Caco-2 (cell line): ENCODE measurements at regions of chr16 and their contacts with region 1.

Region 1: GRCh38 chr16:53054670-53055485 is at the start of gene CHD9:
- DNase-seq: peak; percentile 90 to 92
- H3K4me3 ChIP-seq: peak within 1 kb of the TSS; percentile 77
- H3K4me3 Mint-ChIP-seq: peak within 1 kb of the TSS; percentile 82
- H3K27ac Mint-ChIP-seq: peak within 1 kb of the TSS; percentile 77
- H3K4me1 ChIP-seq: peaks cover 11% of the 10 kb centered on the region; the same call in 1 of the 2 replicates
- H3K4me1 Mint-ChIP-seq: peaks cover 14% of the 10 kb centered on the region
- H3K27me3 ChIP-seq: no peaks in the 10 kb centered on the region
- H3K27me3 Mint-ChIP-seq: no peaks in the 10 kb centered on the region
- CTCF ChIP-seq: peak; percentile 98 to 99
- total RNA-seq, gene CHD9: 29.1 and 32.0 TPM in 2 replicates

Region 2: DNA sequence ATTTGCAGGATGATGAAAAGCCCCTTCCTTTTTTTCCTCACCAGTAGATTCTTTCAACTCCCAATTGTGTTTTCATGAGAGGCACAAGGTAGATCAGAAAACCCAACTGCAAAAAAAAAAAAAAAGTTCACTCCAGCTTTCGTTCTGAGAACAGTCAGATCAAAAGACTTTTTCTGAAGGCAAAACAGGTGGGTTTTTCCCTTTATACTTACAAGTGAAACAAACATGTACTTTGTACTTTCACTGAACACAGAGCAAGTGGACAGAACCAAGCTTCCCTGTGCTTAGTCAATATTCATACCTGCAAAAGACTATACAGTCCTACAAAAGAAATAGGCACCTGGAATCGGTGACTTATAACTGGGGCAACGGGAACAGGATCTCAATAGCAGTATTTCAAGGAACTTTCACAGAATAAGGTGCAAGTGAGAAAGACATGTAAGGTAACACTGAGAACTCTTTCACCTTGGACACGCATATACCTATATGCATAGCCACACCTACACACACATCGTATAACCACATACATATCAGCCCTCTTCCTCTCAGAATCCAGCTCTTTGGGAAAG is 562.0 kb before region 1 on chr16:
- CTCF ChIA-PET with region 1: no interaction called
- POLR2A ChIA-PET with region 1: no interaction called
- intact Hi-C with region 1: no loop called
- DNase-seq: peak in 1 of 2 experiments; percentile 54
- H3K4me3 ChIP-seq: no peak overlapping the region
- H3K4me3 Mint-ChIP-seq: peak overlapping the region; percentile 57
- H3K27ac Mint-ChIP-seq: peak overlapping the region; percentile 91
- H3K4me1 ChIP-seq: peaks cover 39% of the 10 kb centered on the region
- H3K4me1 Mint-ChIP-seq: peaks cover 38% of the 10 kb centered on the region
- H3K27me3 ChIP-seq: no peaks in the 10 kb centered on the region
- H3K27me3 Mint-ChIP-seq: no peaks in the 10 kb centered on the region
- CTCF ChIP-seq: no peak

Region 3: GRCh38 chr16:53022374-53022773 is 32.5 kb before region 1 on chr16:
- CTCF ChIA-PET with region 1: no interaction called
- POLR2A ChIA-PET with region 1: no interaction called
- intact Hi-C with region 1: no loop called
- DNase-seq: peak; percentile 59 to 73
- H3K4me3 ChIP-seq: no peak overlapping the region
- H3K4me3 Mint-ChIP-seq: no peak overlapping the region
- H3K27ac Mint-ChIP-seq: no peak overlapping the region
- H3K4me1 ChIP-seq: no peaks in the 10 kb centered on the region
- H3K4me1 Mint-ChIP-seq: no peaks in the 10 kb centered on the region
- H3K27me3 ChIP-seq: peaks cover 2% of the 10 kb centered on the region; the same call in 1 of the 2 replicates
- H3K27me3 Mint-ChIP-seq: peaks cover 6% of the 10 kb centered on the region
- CTCF ChIP-seq: peak; percentile 75 to 76

Region 4: DNA sequence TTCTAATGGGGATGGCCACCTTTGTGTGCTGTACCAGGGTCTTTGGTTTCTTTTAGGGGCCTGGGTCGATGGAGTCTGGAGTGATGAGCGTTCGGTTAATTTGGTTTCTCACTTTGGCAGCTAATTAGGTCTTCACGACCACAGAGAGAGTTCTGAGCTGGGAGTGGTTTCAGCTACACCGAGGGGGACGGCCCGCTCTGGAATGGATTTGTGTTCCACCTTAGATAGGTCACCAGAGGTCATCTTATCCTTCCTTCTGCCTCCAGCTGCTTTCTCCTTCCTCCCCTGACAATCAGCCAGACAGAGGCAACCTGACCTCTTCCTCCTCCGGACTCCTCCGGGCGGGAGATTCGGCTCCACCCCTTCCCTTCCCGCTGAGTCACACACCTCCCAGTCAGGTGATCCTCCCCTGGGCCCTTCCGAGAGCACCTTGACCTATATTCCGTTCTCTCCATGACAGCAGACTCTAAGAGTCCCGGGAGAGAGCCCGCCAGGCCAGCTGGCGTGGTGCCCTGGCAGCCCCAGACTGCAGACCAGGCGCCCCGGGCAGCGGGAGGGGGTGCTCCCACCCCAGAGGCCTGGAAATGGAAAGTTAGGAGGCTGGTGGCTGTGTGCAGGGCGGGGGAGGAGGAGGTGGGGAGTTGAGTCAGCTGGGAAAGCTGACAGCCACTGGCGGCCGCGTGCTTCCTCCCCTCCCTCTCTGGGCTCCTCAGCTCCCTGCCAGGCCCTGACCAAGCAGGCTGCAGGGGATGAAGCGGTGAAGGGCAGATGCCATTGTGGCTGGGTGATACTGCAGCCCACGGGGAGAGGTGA is 44.6 kb after region 1 on chr16:
- CTCF ChIA-PET with region 1: interaction called, 13 read pairs
- POLR2A ChIA-PET with region 1: interaction called, 5 read pairs
- intact Hi-C with region 1: loop called (anchors 1 kb)
- DNase-seq: peak; percentile 91 to 95
- H3K4me3 ChIP-seq: peak overlapping the region; percentile 46
- H3K4me3 Mint-ChIP-seq: peak overlapping the region; percentile 77
- H3K27ac Mint-ChIP-seq: peak overlapping the region; percentile 98
- H3K4me1 ChIP-seq: peaks cover 24% of the 10 kb centered on the region
- H3K4me1 Mint-ChIP-seq: peaks cover 12% of the 10 kb centered on the region
- H3K27me3 ChIP-seq: no peaks in the 10 kb centered on the region
- H3K27me3 Mint-ChIP-seq: no peaks in the 10 kb centered on the region
- CTCF ChIP-seq: no peak

Region 5: DNA sequence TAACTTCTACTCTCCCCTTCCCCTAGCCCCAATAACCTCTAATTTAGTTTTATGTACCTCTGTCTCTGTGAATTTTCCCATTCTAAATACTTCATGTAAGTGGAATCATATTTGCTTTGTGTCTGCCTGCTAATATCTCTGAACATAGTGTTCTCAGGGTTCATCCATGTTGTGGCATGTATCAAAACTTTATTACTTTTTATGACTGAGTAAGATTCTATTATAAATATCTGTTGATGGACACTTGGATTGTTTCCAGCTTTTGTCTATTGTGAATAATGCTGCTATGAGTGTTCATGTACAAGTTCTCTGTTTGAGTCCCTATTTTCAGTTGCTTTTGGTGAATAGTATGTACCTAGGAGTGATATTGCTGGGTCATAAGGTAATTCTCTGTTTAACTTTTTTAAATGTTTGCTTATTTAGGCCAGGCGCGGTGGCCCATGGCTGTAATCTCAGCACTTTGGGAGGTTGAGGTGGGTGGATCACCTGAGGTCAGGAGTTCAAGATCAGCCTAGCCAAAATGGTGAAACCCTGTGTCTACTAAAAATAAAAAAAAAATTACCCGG is 92.7 kb after region 1 on chr16:
- CTCF ChIA-PET with region 1: no interaction called
- POLR2A ChIA-PET with region 1: no interaction called
- intact Hi-C with region 1: no loop called
- DNase-seq: no peak
- H3K4me3 ChIP-seq: no peak overlapping the region
- H3K4me3 Mint-ChIP-seq: no peak overlapping the region
- H3K27ac Mint-ChIP-seq: no peak overlapping the region
- H3K4me1 ChIP-seq: peaks cover 4% of the 10 kb centered on the region
- H3K4me1 Mint-ChIP-seq: no peaks in the 10 kb centered on the region
- H3K27me3 ChIP-seq: no peaks in the 10 kb centered on the region
- H3K27me3 Mint-ChIP-seq: no peaks in the 10 kb centered on the region
- CTCF ChIP-seq: no peak

Region 6: DNA sequence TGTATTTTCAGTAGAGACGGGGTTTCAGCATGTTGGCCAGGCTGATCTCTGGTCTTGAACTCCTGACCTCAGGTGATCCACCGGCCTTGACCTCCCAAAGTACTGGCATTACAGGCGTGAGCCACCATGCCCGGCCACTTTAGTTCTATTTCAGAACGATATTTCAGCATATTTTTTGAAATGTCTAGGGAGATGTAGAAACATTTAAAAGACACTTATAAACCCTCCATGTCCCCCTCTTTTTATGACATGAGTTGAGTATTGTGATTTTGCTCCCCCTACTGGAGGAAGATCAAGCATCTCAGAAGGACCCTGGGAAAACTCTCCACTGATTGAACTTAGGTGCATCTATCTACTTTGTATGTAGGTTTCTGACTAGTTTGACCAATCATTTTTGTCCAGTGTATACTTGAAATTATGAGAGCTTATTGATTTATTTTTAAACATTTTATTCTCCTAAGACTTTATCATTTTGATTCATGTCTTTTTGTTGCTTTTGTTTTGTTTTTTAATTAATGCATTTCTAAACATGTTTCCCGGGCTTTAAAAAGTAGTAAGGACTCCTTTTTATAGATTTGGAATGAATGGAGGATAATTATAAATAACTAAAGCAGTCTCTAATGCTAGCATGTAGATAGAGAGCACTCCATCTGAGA is 105.0 kb after region 1 on chr16:
- CTCF ChIA-PET with region 1: interaction called, 3 read pairs
- POLR2A ChIA-PET with region 1: no interaction called
- intact Hi-C with region 1: loop called (anchors 1 kb)
- DNase-seq: peak in 1 of 2 experiments; percentile 65
- H3K4me3 ChIP-seq: no peak overlapping the region
- H3K4me3 Mint-ChIP-seq: no peak overlapping the region
- H3K27ac Mint-ChIP-seq: no peak overlapping the region
- H3K4me1 ChIP-seq: no peaks in the 10 kb centered on the region
- H3K4me1 Mint-ChIP-seq: no peaks in the 10 kb centered on the region
- H3K27me3 ChIP-seq: no peaks in the 10 kb centered on the region
- H3K27me3 Mint-ChIP-seq: no peaks in the 10 kb centered on the region
- CTCF ChIP-seq: peak; percentile 76 to 89

Region 7: DNA sequence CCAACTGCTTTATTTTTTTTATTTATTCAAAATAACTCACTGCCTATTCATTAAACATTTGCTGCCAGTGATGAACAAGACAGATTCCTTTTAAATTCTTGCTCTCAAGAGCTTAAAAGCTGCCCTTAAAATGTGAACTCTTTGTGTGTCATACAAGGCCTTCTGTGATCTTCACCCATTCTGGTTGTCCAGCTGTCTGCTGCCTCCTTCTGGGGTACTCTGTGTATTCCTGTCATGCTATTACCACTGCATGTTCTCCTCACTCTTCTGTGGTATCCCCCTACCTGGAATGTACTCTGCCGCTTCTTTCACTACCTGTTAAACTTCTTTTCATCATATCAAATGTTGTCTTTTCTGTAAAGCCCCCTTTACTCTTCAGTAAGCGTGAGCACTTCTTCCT is 165.7 kb after region 1 on chr16:
- CTCF ChIA-PET with region 1: no interaction called
- POLR2A ChIA-PET with region 1: no interaction called
- intact Hi-C with region 1: loop called (anchors 5 kb)
- DNase-seq: peak in 1 of 2 experiments; percentile 22
- H3K4me3 ChIP-seq: no peak overlapping the region
- H3K4me3 Mint-ChIP-seq: no peak overlapping the region
- H3K27ac Mint-ChIP-seq: no peak overlapping the region
- H3K4me1 ChIP-seq: no peaks in the 10 kb centered on the region
- H3K4me1 Mint-ChIP-seq: no peaks in the 10 kb centered on the region
- H3K27me3 ChIP-seq: no peaks in the 10 kb centered on the region
- H3K27me3 Mint-ChIP-seq: no peaks in the 10 kb centered on the region
- CTCF ChIP-seq: peak in 1 of 2 experiments; percentile 32

Region 8: GRCh38 chr16:53309457-53309856 is 254.6 kb after region 1 on chr16:
- CTCF ChIA-PET with region 1: no interaction called
- POLR2A ChIA-PET with region 1: no interaction called
- intact Hi-C with region 1: no loop called
- DNase-seq: no peak
- H3K4me3 ChIP-seq: no peak overlapping the region
- H3K4me3 Mint-ChIP-seq: no peak overlapping the region
- H3K27ac Mint-ChIP-seq: no peak overlapping the region
- H3K4me1 ChIP-seq: peaks cover 9% of the 10 kb centered on the region; the same call in 1 of the 2 replicates
- H3K4me1 Mint-ChIP-seq: no peaks in the 10 kb centered on the region
- H3K27me3 ChIP-seq: no peaks in the 10 kb centered on the region
- H3K27me3 Mint-ChIP-seq: no peaks in the 10 kb centered on the region
- CTCF ChIP-seq: no peak

Region 9: DNA sequence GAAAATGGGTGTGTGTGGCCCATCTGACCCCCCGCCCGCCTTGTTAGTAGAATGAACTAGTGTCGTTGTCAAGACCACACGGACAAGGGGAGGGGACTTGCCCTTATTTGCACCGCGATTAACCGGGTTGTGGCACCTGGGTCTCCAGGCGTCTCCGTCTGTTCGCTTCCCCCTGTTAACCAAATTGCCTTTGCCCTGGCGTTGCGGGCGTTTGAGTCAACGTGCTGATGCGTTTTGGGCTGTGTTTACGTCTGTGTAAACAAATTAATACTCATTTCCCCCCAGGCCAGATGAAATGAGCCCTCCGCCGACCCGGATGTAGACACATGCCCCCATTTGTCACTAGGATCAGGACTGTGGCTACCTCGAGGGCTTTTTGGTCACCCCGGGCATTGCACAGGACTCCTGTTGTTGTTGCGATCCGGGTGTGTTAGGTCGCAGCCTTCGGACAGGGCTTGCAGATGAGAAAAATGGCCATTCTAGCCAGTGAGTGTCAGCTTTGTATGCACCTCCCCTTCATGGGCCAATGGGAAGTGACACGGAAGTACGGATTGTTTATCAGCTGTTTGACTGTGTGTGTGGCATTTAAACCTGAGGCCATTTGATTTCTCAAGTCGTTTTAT is 380.3 kb after region 1 on chr16:
- CTCF ChIA-PET with region 1: no interaction called
- POLR2A ChIA-PET with region 1: no interaction called
- intact Hi-C with region 1: loop called (anchors 10 kb)
- DNase-seq: peak; percentile 85 to 88
- H3K4me3 ChIP-seq: peak overlapping the region; percentile 99
- H3K4me3 Mint-ChIP-seq: peak overlapping the region; percentile 99
- H3K27ac Mint-ChIP-seq: peak overlapping the region; percentile 96
- H3K4me1 ChIP-seq: peaks cover 17% of the 10 kb centered on the region
- H3K4me1 Mint-ChIP-seq: peaks cover 18% of the 10 kb centered on the region
- H3K27me3 ChIP-seq: no peaks in the 10 kb centered on the region
- H3K27me3 Mint-ChIP-seq: no peaks in the 10 kb centered on the region
- CTCF ChIP-seq: no peak